ENCODE measurements at regions of chr17 and their contacts with region 1.

Region 1: GRCh38 chr17:38898812-38899348 is 26.5 kb upstream of the LASP1NB start:
- DNase-seq: peak; percentile 81 to 91
- ATAC-seq: peak; percentile 75 to 86 (median 78)
- H3K4me3 ChIP-seq: peak overlapping the region; percentile 14
- H3K4me3 Mint-ChIP-seq: peak overlapping the region; percentile 87
- H3K27ac ChIP-seq: peak overlapping the region; percentile 93
- H3K27ac Mint-ChIP-seq: peak overlapping the region; percentile 95
- H3K4me1 ChIP-seq: peaks cover 97% of the 10 kb centered on the region
- H3K4me1 Mint-ChIP-seq: peaks cover 62 to 72% of the 10 kb centered on the region in 2 donors
- H3K27me3 ChIP-seq: no peaks in the 10 kb centered on the region
- H3K27me3 Mint-ChIP-seq: no peaks in the 10 kb centered on the region
- CTCF ChIP-seq: no peak

Region 2: GRCh38 chr17:38777641-38778250 is 121.1 kb before region 1 on chr17:
- intact Hi-C with region 1: no loop called
- DNase-seq: no peak
- ATAC-seq: no peak
- H3K4me3 ChIP-seq: no peak overlapping the region
- H3K4me3 Mint-ChIP-seq: no peak overlapping the region
- H3K27ac ChIP-seq: no peak overlapping the region
- H3K27ac Mint-ChIP-seq: no peak overlapping the region
- H3K4me1 ChIP-seq: no peaks in the 10 kb centered on the region
- H3K4me1 Mint-ChIP-seq: no peaks in the 10 kb centered on the region
- H3K27me3 ChIP-seq: no peaks in the 10 kb centered on the region
- H3K27me3 Mint-ChIP-seq: no peaks in the 10 kb centered on the region
- CTCF ChIP-seq: no peak

Region 3: GRCh38 chr17:38912221-38912813 is 13.4 kb after region 1 on chr17:
- intact Hi-C with region 1: loop called (anchors 1 kb)
- DNase-seq: peak; percentile 2 to 14
- ATAC-seq: no peak
- H3K4me3 ChIP-seq: no peak overlapping the region
- H3K4me3 Mint-ChIP-seq: peak overlapping the region; percentile 57
- H3K27ac ChIP-seq: peak overlapping the region; percentile 36
- H3K27ac Mint-ChIP-seq: peak overlapping the region; percentile 81 to 84
- H3K4me1 ChIP-seq: peaks cover 78% of the 10 kb centered on the region
- H3K4me1 Mint-ChIP-seq: peaks cover 49 to 73% of the 10 kb centered on the region in 2 donors
- H3K27me3 ChIP-seq: no peaks in the 10 kb centered on the region
- H3K27me3 Mint-ChIP-seq: no peaks in the 10 kb centered on the region
- CTCF ChIP-seq: no peak

Region 4: GRCh38 chr17:39045948-39046679 is 147.2 kb after region 1 on chr17:
- intact Hi-C with region 1: no loop called
- DNase-seq: no peak
- ATAC-seq: no peak
- H3K4me3 ChIP-seq: no peak overlapping the region
- H3K4me3 Mint-ChIP-seq: no peak overlapping the region
- H3K27ac ChIP-seq: no peak overlapping the region
- H3K27ac Mint-ChIP-seq: no peak overlapping the region
- H3K4me1 ChIP-seq: no peaks in the 10 kb centered on the region
- H3K4me1 Mint-ChIP-seq: no peaks in the 10 kb centered on the region
- H3K27me3 ChIP-seq: no peaks in the 10 kb centered on the region
- H3K27me3 Mint-ChIP-seq: peaks cover 1 to 5% of the 10 kb centered on the region in 2 donors
- CTCF ChIP-seq: no peak